ENCODE measurements at regions of chr11 and their contacts with region 1.

Region 1: GRCh38 chr11:57667736-57668435 is at the start of gene ZDHHC5:
- DNase-seq: peak; percentile 100
- H3K4me3 Mint-ChIP-seq: peak within 1 kb of the TSS; percentile 99
- H3K27ac Mint-ChIP-seq: peak within 1 kb of the TSS; percentile 99
- H3K4me1 Mint-ChIP-seq: peaks cover 29% of the 10 kb centered on the region
- H3K27me3 Mint-ChIP-seq: no peaks in the 10 kb centered on the region
- total RNA-seq, gene ZDHHC5: 64.7 and 69.9 TPM in 2 replicates

Region 2: GRCh38 chr11:57426929-57427726 is 240.8 kb before region 1 on chr11 and contains the start of gene SLC43A3:
- intact Hi-C with region 1: loop called (anchors 5 kb)
- DNase-seq: peak; percentile 66
- H3K4me3 Mint-ChIP-seq: peak within 1 kb of the TSS; percentile 91
- H3K27ac Mint-ChIP-seq: peak within 1 kb of the TSS; percentile 64
- H3K4me1 Mint-ChIP-seq: peaks cover 44% of the 10 kb centered on the region
- H3K27me3 Mint-ChIP-seq: peaks cover 3% of the 10 kb centered on the region
- total RNA-seq, gene SLC43A3: 174 and 189 TPM in 2 replicates

Region 3: DNA sequence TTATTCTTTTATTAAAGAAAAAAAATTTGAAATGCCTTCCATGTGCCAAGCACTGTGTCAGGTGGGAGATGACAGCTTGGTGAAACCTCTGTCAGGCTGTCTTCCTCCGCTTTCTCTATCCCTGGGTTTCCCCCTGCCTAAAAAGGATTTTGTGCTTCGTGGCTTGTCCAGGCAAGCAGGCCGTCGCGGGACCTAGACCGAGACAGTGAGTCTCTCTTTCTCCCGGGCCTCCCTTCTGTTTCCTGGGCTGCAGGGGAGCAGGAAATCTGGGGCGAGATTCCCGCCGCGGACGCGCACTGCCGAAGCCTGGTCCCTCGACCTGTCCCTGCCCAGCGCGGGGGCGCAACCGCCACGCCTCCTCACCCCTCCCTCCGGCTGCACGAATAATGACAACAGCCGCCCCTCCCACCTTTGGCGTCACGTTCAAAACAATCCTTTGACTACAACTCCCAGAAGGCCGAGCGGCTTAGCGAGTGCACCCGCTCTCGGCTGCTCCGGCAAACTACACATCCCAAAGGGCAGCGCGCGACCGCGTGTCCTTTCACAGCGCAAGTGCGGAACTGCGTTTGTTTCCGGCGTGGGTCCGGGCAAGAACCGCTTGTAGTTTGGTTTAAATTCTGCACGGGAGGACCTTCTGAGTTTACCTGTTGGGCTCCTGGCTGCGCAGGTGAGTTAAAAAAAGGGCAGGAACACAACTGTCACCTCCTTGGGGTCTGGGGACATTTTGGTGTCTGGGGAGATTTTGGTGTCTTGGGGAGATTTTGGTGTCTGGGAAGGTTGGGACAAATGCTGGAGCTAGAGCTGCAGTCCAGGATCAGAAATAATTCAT is 10.5 kb before region 1 on chr11 and contains the start of gene CLP1:
- intact Hi-C with region 1: loop called (anchors 1 kb)
- DNase-seq: peak; percentile 99
- H3K4me3 Mint-ChIP-seq: peak within 1 kb of the TSS; percentile 99
- H3K27ac Mint-ChIP-seq: peak within 1 kb of the TSS; percentile 94
- H3K4me1 Mint-ChIP-seq: peaks cover 26% of the 10 kb centered on the region
- H3K27me3 Mint-ChIP-seq: no peaks in the 10 kb centered on the region
- total RNA-seq, gene CLP1: 17.7 and 19.9 TPM in 2 replicates

Region 4: GRCh38 chr11:57741132-57742086 is 73.5 kb after region 1 on chr11 and contains the start of gene SELENOH:
- intact Hi-C with region 1: loop called (anchors 1 kb)
- DNase-seq: peak; percentile 94
- H3K4me3 Mint-ChIP-seq: peak within 1 kb of the TSS; percentile 96
- H3K27ac Mint-ChIP-seq: peak within 1 kb of the TSS; percentile 90
- H3K4me1 Mint-ChIP-seq: peaks cover 17% of the 10 kb centered on the region
- H3K27me3 Mint-ChIP-seq: no peaks in the 10 kb centered on the region
- total RNA-seq, gene SELENOH: 179 and 183 TPM in 2 replicates

Region 5: GRCh38 chr11:58524232-58525036 is 856.5 kb after region 1 on chr11:
- intact Hi-C with region 1: loop called (anchors 5 kb)
- DNase-seq: peak; percentile 29
- H3K4me3 Mint-ChIP-seq: peak overlapping the region; percentile 75
- H3K27ac Mint-ChIP-seq: peak overlapping the region; percentile 88
- H3K4me1 Mint-ChIP-seq: peaks cover 48% of the 10 kb centered on the region
- H3K27me3 Mint-ChIP-seq: no peaks in the 10 kb centered on the region